ENCODE measurements at regions of chr1 and their contacts with region 1.

Region 1: GRCh38 chr1:42941640-42942330 is 16.9 kb downstream of the SLC2A1 start:
- DNase-seq: no peak
- H3K4me3 Mint-ChIP-seq: peak overlapping the region; percentile 28
- H3K27ac Mint-ChIP-seq: peak overlapping the region; percentile 93
- H3K4me1 Mint-ChIP-seq: peaks cover 97% of the 10 kb centered on the region
- H3K27me3 Mint-ChIP-seq: no peaks in the 10 kb centered on the region

Region 2: GRCh38 chr1:42931108-42931539 is 10.7 kb before region 1 on chr1:
- intact Hi-C with region 1: loop called (anchors 1 kb)
- DNase-seq: peak; percentile 53
- H3K4me3 Mint-ChIP-seq: peak overlapping the region; percentile 71
- H3K27ac Mint-ChIP-seq: peak overlapping the region; percentile 86
- H3K4me1 Mint-ChIP-seq: peaks cover 70% of the 10 kb centered on the region
- H3K27me3 Mint-ChIP-seq: no peaks in the 10 kb centered on the region